Activated naive CD4-positive, alpha-beta T cell treated with anti-CD3 and anti-CD28 coated beads for 36 hours (primary cell): ENCODE measurements at regions of chr15 and their contacts with region 1.

Region 1: DNA sequence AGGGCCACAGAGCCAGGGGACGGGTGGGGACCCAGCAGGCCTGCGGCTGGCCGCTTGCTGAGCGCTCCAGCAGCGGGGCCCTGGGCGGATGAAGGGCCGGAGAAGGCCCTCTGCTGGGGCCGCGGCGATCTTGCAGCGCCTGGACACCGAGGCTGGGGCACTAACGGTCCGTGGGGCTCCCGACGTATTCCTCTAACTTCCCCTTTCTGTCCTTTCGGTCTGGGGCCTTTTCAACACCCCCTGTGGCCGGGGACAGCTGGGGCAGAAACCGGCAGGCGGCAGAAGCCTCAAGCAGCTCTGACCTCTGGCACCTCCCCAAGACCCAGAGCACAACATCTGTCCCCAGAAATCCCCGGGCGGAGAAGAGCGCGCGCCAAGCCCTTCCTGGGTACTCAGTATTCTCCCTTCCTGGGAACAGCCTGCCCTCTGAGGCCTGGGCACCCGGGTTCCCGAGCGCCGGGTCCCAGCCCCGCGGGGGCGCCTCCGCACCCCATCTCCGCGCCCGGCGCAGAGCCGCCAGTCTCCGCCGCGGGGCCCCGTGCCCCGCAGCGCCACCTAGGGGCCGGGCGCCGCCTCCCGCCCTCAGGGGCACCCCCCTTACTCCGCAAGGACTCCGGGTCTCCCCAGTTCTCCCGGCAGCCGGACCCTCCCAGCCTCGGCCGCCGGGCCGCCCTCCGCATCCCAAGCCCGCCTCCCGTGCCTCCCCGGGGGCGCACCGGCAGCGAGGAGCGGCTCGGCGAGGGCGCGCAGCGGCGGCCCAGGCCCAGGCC is 582 bp upstream of the SLCO3A1 start:
- DNase-seq: peak; percentile 68
- H3K4me3 Mint-ChIP-seq: peak overlapping the region; percentile 79
- H3K27ac Mint-ChIP-seq: peak overlapping the region; percentile 61
- H3K4me1 Mint-ChIP-seq: peaks cover 59% of the 10 kb centered on the region
- H3K27me3 Mint-ChIP-seq: peaks cover 5% of the 10 kb centered on the region

Region 2: DNA sequence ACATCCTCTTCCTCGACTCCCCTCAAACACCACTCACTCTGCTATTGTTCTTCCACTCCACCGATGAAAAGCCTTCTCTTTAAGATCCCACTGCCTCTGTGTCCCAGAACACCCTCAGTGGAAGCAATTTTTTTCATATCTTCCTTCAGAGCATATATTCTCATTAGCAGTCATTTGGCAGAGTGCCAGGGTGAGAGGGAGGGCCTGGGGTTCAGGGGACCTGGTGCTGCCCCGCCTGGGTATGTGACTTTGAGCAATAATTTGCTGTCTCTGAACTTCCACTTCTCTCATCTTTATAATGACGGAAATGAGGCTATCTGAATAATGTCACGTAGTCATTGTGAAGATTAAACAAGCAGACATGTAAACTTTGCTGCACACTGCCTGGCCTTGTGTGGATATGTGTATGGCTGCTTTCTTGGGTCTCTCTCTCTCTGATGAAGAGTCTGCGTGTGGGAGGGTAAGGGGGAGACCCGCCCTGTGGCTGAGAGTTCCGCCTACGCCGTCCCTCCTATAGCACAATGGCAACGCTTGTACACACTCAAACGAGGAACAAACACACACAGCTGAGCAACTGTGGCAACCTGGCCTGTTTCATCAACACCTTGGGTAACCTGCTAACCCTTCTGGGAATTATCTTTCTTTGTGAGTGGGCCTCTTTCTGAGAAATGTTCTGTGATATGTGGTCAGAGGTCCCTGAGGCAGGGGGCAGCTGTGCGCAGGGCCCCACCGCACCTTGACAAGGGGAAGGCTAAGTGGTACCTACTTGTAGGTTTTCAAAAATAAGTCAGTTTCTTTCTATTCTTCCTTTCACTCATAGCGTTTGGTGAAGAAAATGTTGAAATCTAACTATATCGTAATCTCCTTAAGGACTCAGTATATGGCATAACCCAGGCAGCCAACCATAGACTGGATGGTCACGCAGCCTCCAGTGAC is 383.0 kb before region 1 on chr15:
- CTCF ChIA-PET with region 1: no interaction called
- intact Hi-C with region 1: loop called (anchors 2 kb)
- DNase-seq: peak; percentile 93
- H3K4me3 Mint-ChIP-seq: peak overlapping the region; percentile 0
- H3K27ac Mint-ChIP-seq: peak overlapping the region; percentile 82
- H3K4me1 Mint-ChIP-seq: peaks cover 50% of the 10 kb centered on the region
- H3K27me3 Mint-ChIP-seq: no peaks in the 10 kb centered on the region

Region 3: DNA sequence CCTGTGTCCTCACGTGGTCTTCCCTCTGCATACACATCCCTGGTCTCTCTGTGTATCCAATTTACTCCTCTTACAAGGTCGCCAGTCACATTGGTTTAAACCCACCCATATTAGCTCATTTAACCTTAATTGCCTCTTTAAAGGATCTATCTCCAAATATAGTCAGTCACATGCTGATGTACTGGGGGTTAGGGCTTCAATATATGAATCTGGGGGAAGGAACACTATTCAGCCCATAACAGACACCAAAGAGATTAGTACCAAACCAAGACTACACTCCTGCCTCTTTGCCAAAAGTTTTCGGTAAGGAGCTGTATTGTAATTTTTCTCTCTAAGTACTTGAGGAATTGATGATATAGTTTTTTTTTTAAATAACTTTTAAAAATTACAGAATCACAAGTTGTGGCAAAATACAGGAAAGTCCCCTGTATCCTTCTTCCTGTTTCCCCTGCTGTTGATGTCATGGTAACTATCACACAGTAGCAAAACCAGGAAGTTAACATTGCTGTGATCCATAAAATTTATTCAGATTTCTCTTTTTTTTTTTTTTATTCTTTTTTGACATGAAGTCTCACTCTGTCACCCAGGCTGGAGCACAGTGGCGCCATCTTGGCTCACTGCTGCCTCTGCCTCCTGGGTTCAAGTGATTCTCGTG is 68.4 kb after region 1 on chr15:
- CTCF ChIA-PET with region 1: interaction called, 5 read pairs
- intact Hi-C with region 1: loop called (anchors 5 kb)
- DNase-seq: peak; percentile 10
- H3K4me3 Mint-ChIP-seq: no peak overlapping the region
- H3K27ac Mint-ChIP-seq: no peak overlapping the region
- H3K4me1 Mint-ChIP-seq: peaks cover 40% of the 10 kb centered on the region
- H3K27me3 Mint-ChIP-seq: no peaks in the 10 kb centered on the region

Region 4: GRCh38 chr15:92011611-92012367 is 158.9 kb after region 1 on chr15:
- CTCF ChIA-PET with region 1: interaction called, 6 read pairs
- intact Hi-C with region 1: loop called (anchors 5 kb)
- DNase-seq: peak; percentile 65
- H3K4me3 Mint-ChIP-seq: peak overlapping the region; percentile 51
- H3K27ac Mint-ChIP-seq: peak overlapping the region; percentile 72
- H3K4me1 Mint-ChIP-seq: peaks cover 65% of the 10 kb centered on the region
- H3K27me3 Mint-ChIP-seq: no peaks in the 10 kb centered on the region

Region 5: GRCh38 chr15:92077353-92078085 is 224.6 kb after region 1 on chr15:
- CTCF ChIA-PET with region 1: interaction called, 83 read pairs
- intact Hi-C with region 1: loop called (anchors 1 kb)
- DNase-seq: peak; percentile 90
- H3K4me3 Mint-ChIP-seq: no peak overlapping the region
- H3K27ac Mint-ChIP-seq: no peak overlapping the region
- H3K4me1 Mint-ChIP-seq: peaks cover 27% of the 10 kb centered on the region
- H3K27me3 Mint-ChIP-seq: no peaks in the 10 kb centered on the region

Region 6: GRCh38 chr15:92625251-92625980 is 772.5 kb after region 1 on chr15:
- CTCF ChIA-PET with region 1: no interaction called
- intact Hi-C with region 1: loop called (anchors 1 kb)
- DNase-seq: peak; percentile 48
- H3K4me3 Mint-ChIP-seq: no peak overlapping the region
- H3K27ac Mint-ChIP-seq: peak overlapping the region; percentile 82
- H3K4me1 Mint-ChIP-seq: peaks cover 24% of the 10 kb centered on the region
- H3K27me3 Mint-ChIP-seq: no peaks in the 10 kb centered on the region

Region 7: GRCh38 chr15:93102211-93102610 is 1249.3 kb after region 1 on chr15:
- CTCF ChIA-PET with region 1: no interaction called
- intact Hi-C with region 1: no loop called
- DNase-seq: no peak
- H3K4me3 Mint-ChIP-seq: no peak overlapping the region
- H3K27ac Mint-ChIP-seq: no peak overlapping the region
- H3K4me1 Mint-ChIP-seq: no peaks in the 10 kb centered on the region
- H3K27me3 Mint-ChIP-seq: peaks cover 11% of the 10 kb centered on the region